Colonic mucosa (tissue), 4 donors: ENCODE measurements at regions of chr16 and their contacts with region 1.

Region 1: GRCh38 chr16:82229796-82230619 is 60.0 kb upstream of the MPHOSPH6 start:
- DNase-seq: peak; percentile 85
- H3K4me3 ChIP-seq: no peak overlapping the region
- H3K27ac ChIP-seq: no peak overlapping the region
- H3K4me1 ChIP-seq: no peaks in the 10 kb centered on the region
- H3K27me3 ChIP-seq: no peaks in the 10 kb centered on the region
- CTCF ChIP-seq: peak; percentile 89

Region 2: DNA sequence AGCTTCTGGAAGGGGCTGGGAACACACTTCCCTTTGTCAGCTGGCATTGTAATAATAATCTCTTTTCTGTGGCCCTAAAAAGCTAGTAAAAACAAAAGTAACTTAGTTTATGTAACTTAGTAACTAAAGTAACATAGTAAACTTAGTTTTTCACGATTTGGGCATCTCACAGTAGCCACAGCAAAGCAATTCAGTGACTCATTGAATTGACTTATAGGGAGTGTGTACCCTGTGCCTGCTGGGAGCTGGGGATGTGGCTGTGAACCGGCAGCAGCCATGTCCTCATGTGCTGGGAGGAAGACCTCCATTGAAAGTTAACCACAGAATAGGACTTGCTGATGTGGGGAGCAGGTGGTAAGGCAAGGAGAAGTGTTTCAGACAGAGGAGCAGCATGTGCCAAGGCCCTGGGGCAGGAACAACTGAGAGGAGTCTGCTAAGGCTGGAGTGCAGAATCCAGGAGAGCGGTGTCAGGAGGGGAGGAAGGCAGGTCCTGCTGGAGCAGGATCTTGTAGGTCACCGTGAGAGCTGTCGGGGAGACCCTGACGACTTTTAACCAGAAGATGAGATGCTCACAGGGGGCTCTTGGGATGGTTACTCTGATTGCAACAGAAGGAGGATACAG is 338.2 kb before region 1 on chr16:
- intact Hi-C with region 1: loop called (anchors 5 kb)
- DNase-seq: no peak
- H3K4me3 ChIP-seq: no peak overlapping the region
- H3K27ac ChIP-seq: no peak overlapping the region
- H3K4me1 ChIP-seq: no peaks in the 10 kb centered on the region
- H3K27me3 ChIP-seq: no peaks in the 10 kb centered on the region
- CTCF ChIP-seq: no peak

Region 3: GRCh38 chr16:81940781-81941560 is 289.0 kb before region 1 on chr16:
- intact Hi-C with region 1: loop called (anchors 5 kb)
- DNase-seq: no peak
- H3K4me3 ChIP-seq: no peak overlapping the region
- H3K27ac ChIP-seq: no peak overlapping the region
- H3K4me1 ChIP-seq: no peaks in the 10 kb centered on the region
- H3K27me3 ChIP-seq: no peaks in the 10 kb centered on the region
- CTCF ChIP-seq: peak; percentile 40

Region 4: DNA sequence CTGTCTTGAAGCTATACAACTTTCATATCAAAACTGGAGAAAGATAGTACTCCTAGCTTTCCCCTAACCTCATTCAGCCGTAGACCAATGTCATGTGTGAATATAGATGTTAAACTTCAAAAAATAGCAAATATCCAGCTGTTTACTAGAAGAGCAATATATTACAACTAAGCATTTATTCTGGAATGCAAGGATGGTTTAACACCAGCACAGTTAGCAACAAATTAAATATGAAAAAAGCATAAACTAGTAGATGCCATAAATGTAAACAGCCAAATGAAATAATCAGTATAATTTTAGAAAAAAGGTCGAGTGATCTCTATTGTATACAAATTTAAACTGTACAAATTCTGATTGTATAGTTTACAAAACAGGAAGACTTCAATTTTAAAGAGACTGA is 278.4 kb before region 1 on chr16:
- intact Hi-C with region 1: no loop called
- DNase-seq: no peak
- H3K4me3 ChIP-seq: no peak overlapping the region
- H3K27ac ChIP-seq: no peak overlapping the region
- H3K4me1 ChIP-seq: no peaks in the 10 kb centered on the region
- H3K27me3 ChIP-seq: no peaks in the 10 kb centered on the region
- CTCF ChIP-seq: no peak

Region 5: DNA sequence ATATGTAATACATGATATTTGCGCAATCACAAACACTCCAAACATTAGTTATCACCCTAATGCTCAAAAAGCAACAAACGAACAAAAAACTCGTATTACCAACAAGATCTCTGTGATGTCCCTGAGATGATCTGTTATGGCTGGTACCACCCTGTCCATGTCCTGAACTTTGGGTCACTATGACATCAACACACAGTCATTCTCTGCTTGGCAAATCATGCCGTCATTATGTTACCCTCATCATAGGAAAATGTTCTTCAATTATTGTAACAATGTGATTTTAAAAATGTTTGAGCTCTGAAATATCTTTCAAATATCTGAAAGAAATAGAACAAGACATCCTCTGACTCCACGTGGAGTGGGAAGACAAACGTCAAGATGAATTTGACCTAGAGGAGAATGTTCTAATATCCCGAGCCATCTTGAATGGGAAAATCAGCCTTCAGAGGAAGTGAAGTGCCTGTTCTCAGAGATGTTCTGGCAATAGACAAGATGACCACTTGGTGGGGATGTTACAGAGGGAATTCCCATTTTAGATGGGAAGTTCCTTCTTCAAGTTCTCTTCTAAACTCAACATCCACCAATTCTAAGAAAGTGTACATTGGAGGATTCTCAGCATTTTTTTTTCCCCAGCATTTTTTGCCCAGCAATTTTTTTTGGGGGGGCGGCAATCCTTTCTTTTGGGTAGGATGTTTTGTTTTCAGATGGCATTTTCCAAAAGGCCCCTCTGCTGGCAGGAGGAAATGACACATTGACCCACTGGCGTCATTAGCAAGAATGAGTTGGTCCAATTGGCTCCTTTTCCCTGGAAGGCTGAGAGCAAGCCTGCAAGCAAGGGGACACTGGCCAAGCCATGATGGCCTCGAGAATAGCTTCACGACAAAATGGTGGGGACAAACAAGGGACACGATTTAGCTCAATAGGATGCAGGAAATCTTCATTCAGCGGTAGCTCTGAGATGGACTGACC is 198.6 kb before region 1 on chr16:
- intact Hi-C with region 1: loop called (anchors 1 kb)
- DNase-seq: peak; percentile 48
- H3K4me3 ChIP-seq: no peak overlapping the region
- H3K27ac ChIP-seq: no peak overlapping the region
- H3K4me1 ChIP-seq: peaks cover 6% of the 10 kb centered on the region
- H3K27me3 ChIP-seq: no peaks in the 10 kb centered on the region
- CTCF ChIP-seq: peak; percentile 45

Region 6: DNA sequence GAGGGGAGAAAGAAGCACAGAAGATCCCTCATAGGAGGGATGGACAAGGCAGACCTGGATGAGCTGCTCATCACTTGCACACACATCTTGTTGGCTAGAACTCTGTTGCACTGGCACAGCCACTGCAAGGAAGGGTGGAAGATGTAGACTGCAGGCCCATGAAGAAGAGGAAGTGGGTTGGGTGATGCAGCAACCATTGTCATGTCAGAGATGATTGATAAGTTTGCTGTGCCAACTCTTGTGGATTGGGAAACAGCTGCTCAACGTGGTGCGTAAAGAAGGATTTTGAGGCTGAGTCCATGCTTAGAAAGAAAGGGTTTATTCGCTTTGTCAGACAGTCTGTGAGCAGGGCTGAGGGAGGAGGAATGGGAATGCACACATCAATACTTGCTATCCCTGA is 101.4 kb after region 1 on chr16:
- intact Hi-C with region 1: no loop called
- DNase-seq: no peak
- H3K4me3 ChIP-seq: no peak overlapping the region
- H3K27ac ChIP-seq: no peak overlapping the region
- H3K4me1 ChIP-seq: no peaks in the 10 kb centered on the region
- H3K27me3 ChIP-seq: no peaks in the 10 kb centered on the region
- CTCF ChIP-seq: no peak

Region 7: GRCh38 chr16:82509691-82510430 is 279.9 kb after region 1 on chr16:
- intact Hi-C with region 1: no loop called
- DNase-seq: no peak
- H3K4me3 ChIP-seq: no peak overlapping the region
- H3K27ac ChIP-seq: no peak overlapping the region
- H3K4me1 ChIP-seq: no peaks in the 10 kb centered on the region
- H3K27me3 ChIP-seq: no peaks in the 10 kb centered on the region
- CTCF ChIP-seq: no peak